CD8-positive, alpha-beta T cell (primary cell): ENCODE measurements at regions of chr6 and their contacts with region 1.

Region 1: GRCh38 chr6:83215131-83216047 is 22.2 kb downstream of the RWDD2A start:
- DNase-seq: peak; percentile 11 to 72 (median 53)
- ATAC-seq: peak; percentile 90
- H3K4me3 ChIP-seq: no peak overlapping the region
- H3K4me3 Mint-ChIP-seq: no peak overlapping the region
- H3K27ac ChIP-seq: no peak overlapping the region
- H3K27ac Mint-ChIP-seq: no peak overlapping the region
- H3K4me1 ChIP-seq: no peaks in the 10 kb centered on the region
- H3K4me1 Mint-ChIP-seq: no peaks in the 10 kb centered on the region
- H3K27me3 ChIP-seq: no peaks in the 10 kb centered on the region
- H3K27me3 Mint-ChIP-seq: peaks cover 9% of the 10 kb centered on the region
- CTCF ChIP-seq: peak; percentile 68

Region 2: DNA sequence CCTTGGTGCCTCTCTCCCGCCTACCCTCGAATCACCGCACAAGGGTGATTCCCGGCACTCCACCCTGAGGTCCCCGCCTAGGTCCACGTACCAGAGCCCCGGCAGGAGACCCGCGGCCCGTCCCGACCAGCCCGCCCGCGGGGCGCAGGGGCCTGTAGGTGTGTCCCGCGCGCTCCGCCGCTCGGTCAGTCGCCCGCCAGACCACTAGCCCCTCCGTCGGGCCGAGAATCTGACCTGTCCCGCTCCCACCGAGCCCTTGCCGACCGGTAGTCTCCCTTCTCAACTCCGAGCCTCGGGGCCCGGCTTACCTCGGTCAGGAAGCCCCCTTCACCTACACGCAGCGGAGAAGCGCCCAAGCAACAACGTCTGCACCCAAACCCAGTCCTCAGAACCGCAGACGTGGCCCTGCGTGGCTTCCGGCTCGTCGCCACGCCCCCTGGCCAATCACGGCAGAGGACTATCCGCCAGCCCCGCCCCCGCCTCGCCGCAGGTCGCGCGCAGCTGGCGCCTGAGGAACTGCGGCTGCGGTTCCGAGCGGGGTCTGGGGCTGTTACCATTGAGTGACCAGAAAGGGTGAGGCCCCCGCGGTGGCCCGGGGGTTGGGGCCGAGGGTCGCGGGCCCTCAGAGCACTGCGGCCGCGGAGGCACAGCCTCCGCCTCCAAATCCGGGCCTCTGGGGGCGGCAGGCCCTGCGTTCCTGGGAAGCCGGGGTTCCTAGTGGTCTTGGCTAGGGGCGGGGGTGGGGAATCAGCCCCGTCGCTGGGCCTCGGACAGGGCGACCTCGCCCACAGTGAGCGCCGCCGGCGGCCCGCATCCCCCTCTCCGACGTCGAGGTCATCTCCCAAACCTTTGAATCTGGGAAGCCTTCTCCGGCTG is 22.3 kb before region 1 on chr6 and contains the starts of genes PGM3 and RWDD2A:
- CTCF ChIA-PET with region 1: interaction called, 19 read pairs
- POLR2A ChIA-PET with region 1: interaction called, 3 read pairs
- intact Hi-C with region 1: loop called in 1 of 2 experiments (anchors 1 kb)
- DNase-seq: peak; percentile 74 to 95 (median 90)
- ATAC-seq: peak; percentile 97
- H3K4me3 ChIP-seq: peak within 1 kb of the TSS; percentile 82 to 84
- H3K4me3 Mint-ChIP-seq: peak within 1 kb of the TSS; percentile 99
- H3K27ac ChIP-seq: peak within 1 kb of the TSS; percentile 51 to 82
- H3K27ac Mint-ChIP-seq: peak within 1 kb of the TSS; percentile 98
- H3K4me1 ChIP-seq: peaks cover 14% of the 10 kb centered on the region
- H3K4me1 Mint-ChIP-seq: peaks cover 53% of the 10 kb centered on the region
- H3K27me3 ChIP-seq: no peaks in the 10 kb centered on the region
- H3K27me3 Mint-ChIP-seq: no peaks in the 10 kb centered on the region
- CTCF ChIP-seq: no peak
- total RNA-seq, gene PGM3: 25.8 to 26.4 TPM
- total RNA-seq, gene RWDD2A: 2.1 to 2.2 TPM

Region 3: DNA sequence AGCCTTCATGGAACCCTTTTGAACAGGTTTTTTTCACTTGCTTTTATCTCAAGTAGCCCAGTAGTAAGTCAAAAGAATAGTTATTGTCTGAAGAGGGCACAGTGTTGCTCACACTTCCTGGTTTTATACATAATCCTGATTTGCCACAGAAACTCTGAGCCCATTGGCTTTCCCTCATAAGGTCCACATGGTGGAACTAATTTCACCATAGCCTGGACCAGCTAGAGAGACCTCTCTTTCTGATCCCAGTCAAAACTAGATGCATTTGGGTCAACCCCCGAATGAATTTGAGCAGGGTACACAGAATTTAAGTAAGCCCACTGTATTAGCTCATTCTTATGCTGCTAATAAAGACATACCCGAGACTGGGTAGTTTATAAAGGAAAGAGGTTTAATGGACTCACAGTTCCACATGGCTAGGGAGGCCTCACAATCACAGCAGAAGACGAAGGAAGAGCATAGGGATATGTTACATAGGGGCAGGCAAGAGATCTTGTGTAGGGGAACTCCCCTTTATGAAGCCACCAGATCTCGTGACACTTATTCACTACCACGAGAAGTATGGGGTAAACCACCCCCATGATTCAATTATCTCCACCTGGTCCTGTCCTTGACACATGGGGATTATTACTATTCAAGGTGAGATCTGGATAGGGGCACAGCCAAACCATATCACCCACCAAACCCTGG is 16.1 kb before region 1 on chr6:
- CTCF ChIA-PET with region 1: interaction called, 19 read pairs
- POLR2A ChIA-PET with region 1: no interaction called
- intact Hi-C with region 1: no loop called
- DNase-seq: no peak
- ATAC-seq: no peak
- H3K4me3 ChIP-seq: no peak overlapping the region
- H3K4me3 Mint-ChIP-seq: no peak overlapping the region
- H3K27ac ChIP-seq: no peak overlapping the region
- H3K27ac Mint-ChIP-seq: no peak overlapping the region
- H3K4me1 ChIP-seq: peaks cover 7% of the 10 kb centered on the region
- H3K4me1 Mint-ChIP-seq: peaks cover 8% of the 10 kb centered on the region
- H3K27me3 ChIP-seq: no peaks in the 10 kb centered on the region
- H3K27me3 Mint-ChIP-seq: no peaks in the 10 kb centered on the region
- CTCF ChIP-seq: no peak

Region 4: DNA sequence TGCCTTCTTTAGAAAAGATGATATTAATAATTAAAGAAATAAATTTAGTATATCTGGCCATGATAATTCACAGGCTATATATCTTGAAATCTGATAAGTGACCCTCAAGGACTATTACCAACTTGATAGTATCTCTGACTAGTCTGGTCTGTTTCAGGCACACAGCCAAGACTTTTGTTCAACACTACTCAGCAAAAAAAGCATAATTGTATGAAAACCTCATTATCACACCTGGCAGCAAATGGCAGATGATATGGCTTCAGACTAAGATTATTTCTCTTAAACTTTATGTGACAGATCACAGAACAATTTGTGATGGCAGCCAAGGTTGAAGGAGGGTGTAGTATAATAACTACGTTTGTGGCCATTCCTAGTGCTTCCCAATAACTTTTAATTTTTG is 92.5 kb after region 1 on chr6:
- CTCF ChIA-PET with region 1: no interaction called
- POLR2A ChIA-PET with region 1: no interaction called
- intact Hi-C with region 1: no loop called
- DNase-seq: no peak
- ATAC-seq: no peak
- H3K4me3 ChIP-seq: no peak overlapping the region
- H3K4me3 Mint-ChIP-seq: no peak overlapping the region
- H3K27ac ChIP-seq: no peak overlapping the region
- H3K27ac Mint-ChIP-seq: no peak overlapping the region
- H3K4me1 ChIP-seq: no peaks in the 10 kb centered on the region
- H3K4me1 Mint-ChIP-seq: no peaks in the 10 kb centered on the region
- H3K27me3 ChIP-seq: no peaks in the 10 kb centered on the region
- H3K27me3 Mint-ChIP-seq: no peaks in the 10 kb centered on the region
- CTCF ChIP-seq: no peak